SK-N-SH (cell line): ENCODE measurements at regions of chr6 and their contacts with region 1.

Region 1: DNA sequence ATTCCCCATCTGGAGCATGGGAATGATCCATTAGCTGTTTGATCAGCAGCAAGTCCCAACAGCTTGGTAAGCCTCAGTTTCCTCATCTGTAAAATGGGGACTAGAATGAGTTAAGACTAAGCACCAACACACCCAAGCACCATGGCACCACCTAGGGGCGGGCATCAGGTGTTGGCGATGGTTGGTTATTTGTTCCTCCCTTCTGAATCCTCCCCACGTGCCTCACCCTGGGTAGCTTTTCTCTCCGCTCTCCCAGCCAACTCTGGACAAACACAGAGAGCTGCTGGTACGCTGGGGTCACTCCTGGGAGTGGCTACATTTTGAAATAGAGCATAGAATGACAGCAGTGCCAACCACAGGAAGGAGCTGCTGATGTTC is 13.3 kb upstream of the ITPR3 start:
- DNase-seq: peak; percentile 43
- H3K4me3 ChIP-seq: no peak overlapping the region
- H3K27ac ChIP-seq: peak overlapping the region in 1 of 2 experiments; percentile 77; a peak in 1 of 4 replicates
- H3K4me1 ChIP-seq: peaks cover 9 to 50% of the 10 kb centered on the region in 2 experiments; a peak in 2 of 4 replicates
- H3K27me3 ChIP-seq: no peaks in the 10 kb centered on the region
- CTCF ChIP-seq: no peak; the same call in 1 of the 2 replicates
- EP300 ChIP-seq: no peak
- RAD21 ChIP-seq: peak; percentile 26

Region 2: GRCh38 chr6:33570806-33571636 is 36.8 kb before region 1 on chr6:
- CTCF ChIA-PET with region 1: no interaction called
- POLR2A ChIA-PET with region 1: no interaction called
- DNase-seq: peak; percentile 93
- H3K4me3 ChIP-seq: peak overlapping the region; percentile 61 to 64
- H3K27ac ChIP-seq: peak overlapping the region in 1 of 2 experiments; percentile 59; a peak in 1 of 4 replicates
- H3K4me1 ChIP-seq: peaks cover 5 to 8% of the 10 kb centered on the region in 2 experiments; a peak in 1 of 4 replicates
- H3K27me3 ChIP-seq: no peaks in the 10 kb centered on the region
- CTCF ChIP-seq: no peak
- EP300 ChIP-seq: no peak
- RAD21 ChIP-seq: no peak

Region 3: GRCh38 chr6:33620856-33621710 is 13.3 kb after region 1 on chr6 and contains the start of gene ITPR3:
- CTCF ChIA-PET with region 1: interaction called, 18 read pairs
- POLR2A ChIA-PET with region 1: interaction called, 11 read pairs
- DNase-seq: peak; percentile 86
- H3K4me3 ChIP-seq: peak within 1 kb of the TSS; percentile 57 to 76
- H3K27ac ChIP-seq: peak within 1 kb of the TSS in 1 of 2 experiments; percentile 45; a peak in 3 of 4 replicates
- H3K4me1 ChIP-seq: peaks cover 0 to 19% of the 10 kb centered on the region in 2 experiments; a peak in 1 of 4 replicates
- H3K27me3 ChIP-seq: no peaks in the 10 kb centered on the region
- CTCF ChIP-seq: no peak
- EP300 ChIP-seq: no peak
- RAD21 ChIP-seq: no peak
- polyA plus RNA-seq, gene ITPR3: 4.7 and 8.1 TPM in 2 replicates

Region 4: DNA sequence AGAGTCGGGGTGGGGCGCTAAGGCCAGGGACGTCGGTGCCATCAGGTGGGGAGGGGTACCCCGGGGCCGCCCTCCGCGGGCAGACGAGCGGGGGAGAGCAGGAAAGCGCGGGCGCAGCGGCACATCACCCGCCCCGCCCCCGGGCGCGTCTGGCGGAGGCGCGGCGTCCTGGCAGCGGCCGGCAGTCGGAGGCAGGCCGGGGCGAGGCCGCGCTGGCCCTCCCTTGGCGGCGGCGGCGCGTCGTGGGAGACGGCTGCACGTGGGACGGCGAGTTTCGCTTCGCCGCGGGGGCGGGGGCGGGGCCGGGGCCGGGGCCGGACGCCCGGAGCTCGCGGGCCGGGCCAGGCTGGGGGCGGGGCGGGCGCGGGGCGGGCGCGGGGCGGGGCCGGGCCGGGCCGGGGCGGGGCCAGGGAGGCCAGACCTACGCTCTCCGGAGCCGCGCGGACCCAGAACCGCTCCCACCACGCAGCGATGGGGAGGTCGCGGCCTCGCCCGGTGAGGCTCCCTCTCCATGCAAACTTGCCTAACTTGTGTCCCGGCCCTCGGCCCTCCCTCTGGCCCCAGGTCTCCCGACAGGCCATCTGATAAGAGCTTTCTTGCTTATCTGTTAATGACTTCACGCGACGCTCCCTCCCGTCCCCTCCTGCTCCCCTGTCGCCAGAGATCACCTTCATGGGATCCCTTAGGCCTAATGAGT is 25.8 kb after region 1 on chr6:
- CTCF ChIA-PET with region 1: interaction called, 25 read pairs
- POLR2A ChIA-PET with region 1: interaction called, 5 read pairs
- DNase-seq: peak; percentile 90
- H3K4me3 ChIP-seq: peak overlapping the region; percentile 58 to 66
- H3K27ac ChIP-seq: peak overlapping the region in 1 of 2 experiments; percentile 61; a peak in 1 of 4 replicates
- H3K4me1 ChIP-seq: peaks cover 0 to 28% of the 10 kb centered on the region in 2 experiments; a peak in 1 of 4 replicates
- H3K27me3 ChIP-seq: no peaks in the 10 kb centered on the region
- CTCF ChIP-seq: no peak
- EP300 ChIP-seq: no peak
- RAD21 ChIP-seq: no peak